ENCODE measurements at regions of chr14 and their contacts with region 1.

Region 1: GRCh38 chr14:94548999-94549985 is 11.9 kb upstream of the SERPINA4 start:
- DNase-seq: peak; percentile 75

Region 2: DNA sequence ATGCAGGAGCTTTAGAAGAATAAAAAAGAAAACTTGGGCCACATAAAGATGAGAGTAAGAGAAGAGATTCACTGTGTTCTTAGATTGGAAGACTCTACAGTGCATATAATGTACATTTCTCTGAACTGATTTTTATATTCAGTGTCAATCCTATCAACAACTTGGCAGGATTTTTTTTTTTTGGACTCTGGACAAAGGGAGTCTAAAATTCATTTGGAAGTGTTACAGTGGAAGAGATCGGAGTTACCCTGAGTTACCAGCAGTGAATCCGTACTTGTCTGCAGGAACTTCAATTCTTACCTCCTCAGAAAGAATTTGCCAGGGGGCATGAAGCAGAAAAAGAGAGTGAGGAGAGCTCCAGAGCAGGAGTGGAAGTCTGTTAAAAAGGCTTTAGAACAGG is 120.7 kb before region 1 on chr14:
- CTCF ChIA-PET with region 1: interaction called, 27 read pairs
- POLR2A ChIA-PET with region 1: no interaction called
- DNase-seq: no peak

Region 3: GRCh38 chr14:94532447-94532846 is 16.8 kb before region 1 on chr14:
- CTCF ChIA-PET with region 1: no interaction called
- POLR2A ChIA-PET with region 1: no interaction called
- DNase-seq: no peak

Region 4: DNA sequence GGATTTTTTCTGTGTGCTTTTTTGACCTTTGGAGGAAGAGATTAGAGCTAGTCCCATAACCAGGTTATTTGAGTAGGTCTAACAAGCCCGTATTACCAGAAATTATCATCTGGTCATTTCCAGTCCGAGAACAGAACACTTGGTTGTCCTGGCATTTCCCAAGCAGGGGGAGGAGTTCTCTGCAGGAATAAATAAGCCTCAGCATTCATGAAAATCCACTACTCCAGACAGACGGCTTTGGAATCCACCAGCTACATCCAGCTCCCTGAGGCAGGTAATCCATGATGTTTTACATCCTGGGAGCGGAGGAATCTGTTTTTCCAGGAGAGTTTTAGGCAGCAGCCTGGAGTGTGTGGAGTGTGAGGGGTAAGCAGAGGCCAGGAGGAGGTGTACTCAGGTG is 62.9 kb after region 1 on chr14 and contains the start of gene SERPINA3:
- CTCF ChIA-PET with region 1: no interaction called
- POLR2A ChIA-PET with region 1: no interaction called
- DNase-seq: no peak

Region 5: GRCh38 chr14:94717808-94718207 is 168.5 kb after region 1 on chr14:
- CTCF ChIA-PET with region 1: no interaction called
- POLR2A ChIA-PET with region 1: no interaction called
- DNase-seq: no peak

Measured in HEK293T (cell line).